Adrenal gland (tissue), 19 donors: ENCODE measurements at regions of chr19 and their contacts with region 1.

Region 1: DNA sequence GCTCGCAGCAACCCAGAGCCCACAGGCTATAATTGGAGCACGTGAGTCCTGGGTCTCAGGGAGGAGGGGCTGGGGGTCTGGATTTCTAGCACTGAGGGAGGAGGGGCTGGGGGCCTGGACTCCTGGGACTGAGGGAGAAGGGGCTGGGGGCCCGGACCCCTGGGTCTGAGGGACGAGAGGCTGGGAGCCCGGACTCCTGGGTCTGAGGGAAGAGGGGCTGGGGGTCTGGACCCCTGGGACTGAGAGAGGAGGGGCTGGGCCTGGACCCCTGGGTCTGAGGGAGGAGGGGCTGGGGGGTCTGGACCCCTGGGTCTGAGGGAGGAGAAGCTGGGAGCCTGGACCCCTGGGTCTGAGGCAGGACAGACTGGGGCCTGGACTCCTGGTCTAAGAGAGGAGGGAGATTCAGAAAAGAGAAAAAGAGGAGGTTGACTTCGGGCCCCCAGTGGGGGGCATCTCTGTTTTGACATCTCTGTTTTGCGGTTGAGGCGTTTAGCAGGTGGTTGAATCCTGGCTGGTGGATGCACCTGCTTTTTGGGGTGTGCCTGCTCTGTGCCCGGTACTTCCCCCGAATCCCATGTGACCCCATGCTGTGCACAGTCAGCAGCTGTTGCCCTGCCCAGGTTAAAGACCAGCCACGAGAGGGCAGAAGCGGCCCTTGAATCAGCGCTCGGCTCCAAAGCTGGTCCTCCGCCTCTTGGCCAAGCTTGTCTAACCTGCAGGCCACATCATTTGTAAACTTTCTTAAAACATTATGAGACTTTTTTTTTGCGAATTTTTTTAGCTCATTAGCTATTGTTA is 10.5 kb downstream of the PVR start:
- DNase-seq: peak; percentile 78 to 92 (median 89)
- H3K4me3 ChIP-seq: no peak overlapping the region
- H3K27ac ChIP-seq: peak overlapping the region in 1 of 5 donors; percentile 26
- H3K4me1 ChIP-seq: peaks cover under 1 to 2% of the 10 kb centered on the region in 2 donors
- H3K27me3 ChIP-seq: no peaks in the 10 kb centered on the region
- CTCF ChIP-seq: peak; percentile 49 to 79 (median 70)
- POLR2A ChIP-seq: no peak

Region 2: GRCh38 chr19:44570984-44571684 is 83.0 kb before region 1 on chr19:
- intact Hi-C with region 1: loop called (anchors 5 kb)
- DNase-seq: peak; percentile 73 to 91 (median 82)
- H3K4me3 ChIP-seq: no peak overlapping the region
- H3K27ac ChIP-seq: no peak overlapping the region
- H3K4me1 ChIP-seq: peaks cover 23 to 33% of the 10 kb centered on the region in 2 donors
- H3K27me3 ChIP-seq: no peaks in the 10 kb centered on the region
- CTCF ChIP-seq: peak; percentile 70 to 87 (median 82)
- POLR2A ChIP-seq: no peak

Region 3: DNA sequence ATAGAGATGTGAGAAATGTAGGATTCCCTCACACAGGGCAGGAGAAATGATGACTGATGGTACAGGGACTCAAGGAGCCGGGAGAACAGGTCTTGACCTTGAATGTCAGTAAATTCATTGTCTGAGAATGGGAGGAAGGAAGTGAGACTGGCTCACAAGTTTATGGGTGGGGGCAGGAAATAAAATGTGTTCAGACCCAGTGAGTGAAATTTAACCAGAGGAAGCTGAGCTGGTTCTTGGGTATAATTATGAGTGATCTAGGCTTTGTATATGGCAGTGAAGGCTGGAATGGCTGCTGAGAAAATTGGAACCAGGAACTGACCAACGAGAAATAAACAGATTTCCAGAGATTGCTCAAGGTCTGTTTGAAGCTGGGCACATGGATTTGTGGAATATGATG is 47.1 kb before region 1 on chr19:
- intact Hi-C with region 1: no loop called
- DNase-seq: peak in 2 of 7 donors; percentile 23 to 60
- H3K4me3 ChIP-seq: no peak overlapping the region
- H3K27ac ChIP-seq: no peak overlapping the region
- H3K4me1 ChIP-seq: no peaks in the 10 kb centered on the region
- H3K27me3 ChIP-seq: no peaks in the 10 kb centered on the region
- CTCF ChIP-seq: no peak
- POLR2A ChIP-seq: no peak

Region 4: GRCh38 chr19:44764975-44765948 is 111.1 kb after region 1 on chr19:
- intact Hi-C with region 1: loop called in 1 of 2 experiments (anchors 10 kb)
- DNase-seq: peak in 6 of 7 donors; percentile 54 to 81 (median 80)
- H3K4me3 ChIP-seq: no peak overlapping the region
- H3K27ac ChIP-seq: peak overlapping the region in 3 of 5 donors; percentile 16 to 49 (median 18)
- H3K4me1 ChIP-seq: peaks cover 0 to 15% of the 10 kb centered on the region in 2 donors
- H3K27me3 ChIP-seq: no peaks in the 10 kb centered on the region
- CTCF ChIP-seq: no peak
- POLR2A ChIP-seq: no peak

Region 5: DNA sequence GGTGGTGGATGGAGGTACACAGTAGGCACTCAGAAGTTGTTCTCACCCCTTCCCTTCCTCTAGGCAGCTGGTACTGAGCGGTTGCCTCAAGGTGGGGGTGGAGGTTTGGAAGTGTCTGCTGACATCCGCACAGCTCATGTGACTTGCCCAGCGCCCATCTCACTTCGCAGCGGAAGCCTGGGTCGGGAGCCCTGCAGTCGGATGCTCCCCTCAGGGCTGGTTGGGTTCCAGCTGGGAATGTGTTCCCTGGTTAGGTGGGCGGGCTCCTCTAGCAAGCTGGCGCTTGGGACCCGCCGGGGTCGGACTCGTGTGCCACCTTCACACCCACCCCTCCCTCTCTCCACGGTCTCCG is 449.0 kb after region 1 on chr19:
- intact Hi-C with region 1: no loop called
- DNase-seq: peak in 1 of 7 donors; percentile 46
- H3K4me3 ChIP-seq: no peak overlapping the region
- H3K27ac ChIP-seq: peak overlapping the region in 2 of 5 donors; percentile 97 to 98
- H3K4me1 ChIP-seq: peaks cover 44 to 76% of the 10 kb centered on the region in 2 donors
- H3K27me3 ChIP-seq: no peaks in the 10 kb centered on the region
- CTCF ChIP-seq: no peak
- POLR2A ChIP-seq: no peak